ENCODE measurements at regions of chr9 and their contacts with region 1.

Region 1: GRCh38 chr9:91047993-91048607 is 246.5 kb downstream of the SYK start:
- DNase-seq: no peak
- H3K4me3 ChIP-seq: no peak overlapping the region
- H3K27ac ChIP-seq: no peak overlapping the region
- H3K4me1 ChIP-seq: no peaks in the 10 kb centered on the region
- H3K27me3 ChIP-seq: no peaks in the 10 kb centered on the region
- CTCF ChIP-seq: no peak
- EP300 ChIP-seq: no peak
- POLR2A ChIP-seq: no peak

Region 2: DNA sequence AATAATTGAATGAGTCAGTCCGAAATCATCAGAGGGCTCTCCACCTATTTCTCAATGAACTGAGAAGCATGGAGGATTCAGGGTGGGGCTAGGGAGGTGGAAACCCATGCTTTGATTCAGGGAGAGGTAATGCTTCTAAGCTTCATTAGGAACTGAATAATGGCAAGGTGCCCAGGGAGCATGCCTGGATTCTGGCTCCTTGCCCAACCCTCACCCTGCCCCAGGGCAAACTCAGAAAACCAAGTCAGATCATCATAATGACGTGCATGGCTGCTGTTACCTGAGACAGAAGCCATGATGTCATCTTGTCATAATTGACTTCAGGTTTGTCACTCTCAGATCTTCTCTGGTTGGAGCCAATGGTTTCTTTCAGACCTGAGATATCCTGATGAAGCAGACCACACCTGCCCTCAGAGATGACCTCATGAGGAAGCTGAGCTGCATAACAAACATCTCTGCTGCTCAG is 46.9 kb before region 1 on chr9:
- in situ Hi-C with region 1: no loop called
- intact Hi-C with region 1: no loop called
- DNase-seq: no peak
- H3K4me3 ChIP-seq: no peak overlapping the region
- H3K27ac ChIP-seq: no peak overlapping the region
- H3K4me1 ChIP-seq: peaks cover 0 to 3% (median 0%) of the 10 kb centered on the region in 4 donors
- H3K27me3 ChIP-seq: no peaks in the 10 kb centered on the region
- CTCF ChIP-seq: no peak
- EP300 ChIP-seq: no peak
- POLR2A ChIP-seq: no peak

Region 3: GRCh38 chr9:91103931-91104330 is 55.8 kb after region 1 on chr9:
- in situ Hi-C with region 1: no loop called
- intact Hi-C with region 1: no loop called
- DNase-seq: no peak
- H3K4me3 ChIP-seq: no peak overlapping the region
- H3K27ac ChIP-seq: no peak overlapping the region
- H3K4me1 ChIP-seq: peaks cover 8 to 22% (median 13%) of the 10 kb centered on the region in 4 donors
- H3K27me3 ChIP-seq: no peaks in the 10 kb centered on the region
- CTCF ChIP-seq: no peak
- EP300 ChIP-seq: no peak
- POLR2A ChIP-seq: no peak

Region 4: DNA sequence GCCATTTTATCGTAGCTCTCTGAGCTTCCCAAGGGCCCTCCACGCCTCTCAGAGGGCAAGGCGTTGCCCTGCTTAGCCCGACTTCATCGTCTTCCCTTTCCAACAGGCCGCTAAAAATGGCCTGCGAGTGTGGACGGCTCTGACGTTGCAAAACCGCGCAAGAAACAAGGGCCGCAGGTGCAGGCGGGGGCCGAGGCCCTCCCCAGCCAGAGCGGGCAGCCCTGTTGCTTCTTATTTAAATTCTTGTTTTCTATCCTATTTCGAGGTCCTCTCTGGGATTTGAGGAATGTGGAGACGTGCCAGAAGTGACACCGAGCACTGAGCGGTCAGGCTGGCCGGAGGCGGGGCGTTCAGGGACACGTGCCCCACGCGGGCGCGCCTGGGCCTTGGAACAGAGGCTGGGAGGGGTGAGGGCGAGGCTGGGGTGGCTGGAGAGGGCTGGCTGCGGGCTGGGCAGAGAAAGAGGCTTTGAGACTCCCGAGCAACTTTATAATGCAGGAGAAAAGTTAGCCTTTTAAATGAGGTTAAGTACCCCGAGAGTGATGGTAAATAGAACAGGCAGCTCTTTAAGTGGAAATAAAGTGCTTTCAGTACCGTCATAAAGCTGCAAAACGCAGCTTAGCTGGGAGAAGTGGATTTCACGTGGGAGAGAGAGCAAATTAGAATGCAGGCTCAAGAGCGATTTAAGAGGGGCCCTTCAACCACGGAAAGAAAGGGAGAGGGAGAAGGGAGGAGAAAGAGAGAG is 70.0 kb after region 1 on chr9:
- in situ Hi-C with region 1: no loop called
- intact Hi-C with region 1: loop called (anchors 10 kb)
- DNase-seq: peak; percentile 86
- H3K4me3 ChIP-seq: peak overlapping the region in 3 of 4 donors; percentile 4 to 30 (median 19)
- H3K27ac ChIP-seq: peak overlapping the region; percentile 45 to 64 (median 50)
- H3K4me1 ChIP-seq: peaks cover 3 to 29% (median 16%) of the 10 kb centered on the region in 4 donors
- H3K27me3 ChIP-seq: peaks cover 3% of the 10 kb centered on the region
- CTCF ChIP-seq: no peak
- EP300 ChIP-seq: no peak
- POLR2A ChIP-seq: no peak

Region 5: DNA sequence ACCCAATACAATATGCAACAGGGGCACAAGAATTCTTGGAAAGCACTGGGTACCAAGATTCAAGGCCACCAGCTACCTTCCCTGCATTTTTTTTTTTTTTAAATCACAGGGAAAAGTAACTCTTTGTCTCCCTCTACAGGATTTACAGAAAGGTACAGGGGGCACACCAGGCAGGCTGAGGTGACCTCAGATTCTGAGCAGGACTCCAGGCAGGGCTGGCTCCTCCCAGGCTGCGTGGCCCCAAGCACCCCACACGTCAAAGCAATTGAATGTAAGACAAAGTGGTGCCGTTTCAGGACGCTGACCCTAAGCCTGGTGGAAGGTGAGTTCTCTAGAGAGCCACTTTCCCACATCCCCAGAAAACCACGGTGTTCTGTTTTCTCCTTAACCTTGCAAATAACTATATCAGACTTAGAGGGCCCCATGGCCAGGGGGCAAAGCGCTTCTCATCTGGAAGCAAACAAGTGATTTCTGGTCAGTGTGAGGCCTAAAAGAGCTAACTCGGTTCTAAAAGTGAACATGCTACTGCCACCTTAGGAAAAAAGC is 679.3 kb after region 1 on chr9:
- in situ Hi-C with region 1: no loop called
- intact Hi-C with region 1: loop called (anchors 10 kb)
- DNase-seq: no peak
- H3K4me3 ChIP-seq: no peak overlapping the region
- H3K27ac ChIP-seq: peak overlapping the region in 3 of 4 donors; percentile 0 to 18 (median 1)
- H3K4me1 ChIP-seq: peaks cover 0 to 3% (median 1%) of the 10 kb centered on the region in 4 donors
- H3K27me3 ChIP-seq: peaks cover under 1% of the 10 kb centered on the region
- CTCF ChIP-seq: peak; percentile 60 to 68 (median 64)
- EP300 ChIP-seq: no peak
- POLR2A ChIP-seq: no peak

Measured in transverse colon (tissue), 4 donors.